PC-9 (cell line): ENCODE measurements at regions of chr11 and their contacts with region 1.

Region 1: GRCh38 chr11:130145975-130146776 is 13.4 kb upstream of the ST14 start:
- DNase-seq: peak; percentile 97 to 100
- H3K4me3 ChIP-seq: peak overlapping the region; percentile 10; the same call in 1 of the 2 replicates
- H3K27ac ChIP-seq: peak overlapping the region; percentile 98
- H3K4me1 ChIP-seq: peaks cover 37% of the 10 kb centered on the region
- H3K27me3 ChIP-seq: no peaks in the 10 kb centered on the region
- CTCF ChIP-seq: peak; percentile 38

Region 2: GRCh38 chr11:129279326-129280026 is 866.7 kb before region 1 on chr11:
- CTCF ChIA-PET with region 1: no interaction called
- POLR2A ChIA-PET with region 1: interaction called, 15 read pairs
- intact Hi-C with region 1: no loop called
- DNase-seq: peak; percentile 54 to 86
- H3K4me3 ChIP-seq: peak overlapping the region; percentile 70
- H3K27ac ChIP-seq: no peak overlapping the region
- H3K4me1 ChIP-seq: peaks cover 50% of the 10 kb centered on the region
- H3K27me3 ChIP-seq: no peaks in the 10 kb centered on the region
- CTCF ChIP-seq: no peak

Region 3: DNA sequence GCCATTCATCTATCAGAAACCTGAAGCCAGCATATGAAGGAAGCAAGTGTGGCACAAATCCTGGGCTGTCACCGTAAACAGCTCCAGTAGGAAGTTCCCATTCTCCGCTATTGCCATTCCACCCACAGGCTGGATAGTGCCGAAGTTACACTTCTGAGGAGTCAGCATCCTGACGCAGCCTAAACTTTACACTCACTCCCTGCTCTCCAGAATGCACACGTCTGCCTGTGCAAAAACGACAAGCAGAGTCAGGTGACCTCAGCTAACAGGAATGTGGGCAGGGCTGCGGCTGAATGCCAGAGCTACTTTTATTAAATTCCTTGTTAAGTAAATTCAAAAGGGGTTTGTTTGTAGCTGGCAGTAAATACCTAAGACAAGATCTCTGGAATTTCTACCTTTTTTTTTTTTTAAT is 284.5 kb before region 1 on chr11:
- CTCF ChIA-PET with region 1: no interaction called
- POLR2A ChIA-PET with region 1: no interaction called
- intact Hi-C with region 1: loop called (anchors 2 kb)
- DNase-seq: peak; percentile 92 to 100
- H3K4me3 ChIP-seq: peak overlapping the region; percentile 41; the same call in 1 of the 2 replicates
- H3K27ac ChIP-seq: peak overlapping the region; percentile 84
- H3K4me1 ChIP-seq: peaks cover 80% of the 10 kb centered on the region
- H3K27me3 ChIP-seq: no peaks in the 10 kb centered on the region
- CTCF ChIP-seq: no peak

Region 4: DNA sequence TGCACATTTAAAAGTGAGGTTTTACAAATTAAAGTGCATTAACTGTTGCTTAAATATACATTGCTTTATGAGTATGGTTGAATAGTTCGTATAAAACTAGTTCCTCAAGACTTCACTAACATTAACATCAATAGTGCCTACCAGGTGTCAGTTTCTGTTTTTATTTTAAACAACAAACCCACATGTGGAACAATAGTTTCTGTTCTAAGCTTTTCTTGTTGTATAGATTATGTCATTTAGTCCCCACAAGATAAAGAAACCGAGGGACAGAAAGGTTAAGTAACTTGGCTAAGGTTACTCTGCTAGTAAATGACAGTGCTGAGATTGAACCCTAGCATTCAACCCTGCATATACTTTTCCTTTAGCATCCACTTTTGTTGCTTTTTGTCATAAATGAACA is 28.0 kb before region 1 on chr11:
- CTCF ChIA-PET with region 1: no interaction called
- POLR2A ChIA-PET with region 1: no interaction called
- intact Hi-C with region 1: no loop called
- DNase-seq: no peak
- H3K4me3 ChIP-seq: no peak overlapping the region
- H3K27ac ChIP-seq: no peak overlapping the region
- H3K4me1 ChIP-seq: peaks cover 40% of the 10 kb centered on the region
- H3K27me3 ChIP-seq: no peaks in the 10 kb centered on the region
- CTCF ChIP-seq: no peak

Region 5: GRCh38 chr11:130131961-130132850 is 14.0 kb before region 1 on chr11:
- CTCF ChIA-PET with region 1: interaction called, 11 read pairs
- POLR2A ChIA-PET with region 1: no interaction called
- intact Hi-C with region 1: no loop called
- DNase-seq: peak; percentile 51 to 68
- H3K4me3 ChIP-seq: no peak overlapping the region
- H3K27ac ChIP-seq: peak overlapping the region; percentile 15; the same call in 1 of the 2 replicates
- H3K4me1 ChIP-seq: no peaks in the 10 kb centered on the region
- H3K27me3 ChIP-seq: no peaks in the 10 kb centered on the region
- CTCF ChIP-seq: peak; percentile 91

Region 6: DNA sequence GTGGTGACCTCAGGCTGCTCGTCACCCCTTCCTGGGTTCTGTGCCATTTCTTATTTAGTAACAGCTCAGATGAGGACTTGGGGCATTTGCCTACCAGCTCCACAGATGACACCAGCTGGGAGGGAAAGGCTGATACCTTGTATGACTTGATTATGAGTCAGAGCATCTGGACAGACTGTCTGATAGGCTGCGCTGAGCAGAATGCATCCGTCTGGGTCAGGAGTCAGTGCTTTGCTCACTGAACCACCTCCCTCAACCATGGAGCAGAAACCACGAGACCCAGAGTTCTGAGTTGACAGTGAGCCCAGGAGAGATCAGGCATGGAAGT is 20.2 kb after region 1 on chr11:
- CTCF ChIA-PET with region 1: interaction called, 5 read pairs
- POLR2A ChIA-PET with region 1: interaction called, 12 read pairs
- intact Hi-C with region 1: loop called (anchors 1 kb)
- DNase-seq: peak; percentile 68 to 98
- H3K4me3 ChIP-seq: no peak overlapping the region
- H3K27ac ChIP-seq: peak overlapping the region; percentile 73
- H3K4me1 ChIP-seq: peaks cover 63% of the 10 kb centered on the region
- H3K27me3 ChIP-seq: no peaks in the 10 kb centered on the region
- CTCF ChIP-seq: no peak